Prostate gland (tissue), 2 donors: ENCODE measurements at regions of chr12 and their contacts with region 1.

Region 1: GRCh38 chr12:25436203-25437030 is 116.7 kb downstream of the LMNTD1 start:
- DNase-seq: peak; percentile 22
- H3K4me3 ChIP-seq: no peak overlapping the region
- H3K27ac ChIP-seq: no peak overlapping the region
- H3K4me1 ChIP-seq: no peaks in the 10 kb centered on the region
- H3K27me3 ChIP-seq: no peaks in the 10 kb centered on the region
- CTCF ChIP-seq: peak; percentile 63 to 77 (median 70)
- POLR2A ChIP-seq: no peak

Region 2: GRCh38 chr12:25482625-25483024 is 46.2 kb after region 1 on chr12:
- intact Hi-C with region 1: no loop called
- DNase-seq: no peak
- H3K4me3 ChIP-seq: no peak overlapping the region
- H3K27ac ChIP-seq: no peak overlapping the region
- H3K4me1 ChIP-seq: no peaks in the 10 kb centered on the region
- H3K27me3 ChIP-seq: no peaks in the 10 kb centered on the region
- CTCF ChIP-seq: no peak
- POLR2A ChIP-seq: no peak

Region 3: GRCh38 chr12:25958428-25959070 is 522.1 kb after region 1 on chr12 and contains the start of gene RASSF8:
- intact Hi-C with region 1: loop called (anchors 10 kb)
- DNase-seq: peak; percentile 68
- H3K4me3 ChIP-seq: peak within 1 kb of the TSS; percentile 59 to 79
- H3K27ac ChIP-seq: peak within 1 kb of the TSS; percentile 78 to 85
- H3K4me1 ChIP-seq: no peaks in the 10 kb centered on the region
- H3K27me3 ChIP-seq: no peaks in the 10 kb centered on the region
- CTCF ChIP-seq: no peak
- POLR2A ChIP-seq: peak; percentile 12
- total RNA-seq, gene RASSF8: 26.0 to 62.1 TPM

Region 4: DNA sequence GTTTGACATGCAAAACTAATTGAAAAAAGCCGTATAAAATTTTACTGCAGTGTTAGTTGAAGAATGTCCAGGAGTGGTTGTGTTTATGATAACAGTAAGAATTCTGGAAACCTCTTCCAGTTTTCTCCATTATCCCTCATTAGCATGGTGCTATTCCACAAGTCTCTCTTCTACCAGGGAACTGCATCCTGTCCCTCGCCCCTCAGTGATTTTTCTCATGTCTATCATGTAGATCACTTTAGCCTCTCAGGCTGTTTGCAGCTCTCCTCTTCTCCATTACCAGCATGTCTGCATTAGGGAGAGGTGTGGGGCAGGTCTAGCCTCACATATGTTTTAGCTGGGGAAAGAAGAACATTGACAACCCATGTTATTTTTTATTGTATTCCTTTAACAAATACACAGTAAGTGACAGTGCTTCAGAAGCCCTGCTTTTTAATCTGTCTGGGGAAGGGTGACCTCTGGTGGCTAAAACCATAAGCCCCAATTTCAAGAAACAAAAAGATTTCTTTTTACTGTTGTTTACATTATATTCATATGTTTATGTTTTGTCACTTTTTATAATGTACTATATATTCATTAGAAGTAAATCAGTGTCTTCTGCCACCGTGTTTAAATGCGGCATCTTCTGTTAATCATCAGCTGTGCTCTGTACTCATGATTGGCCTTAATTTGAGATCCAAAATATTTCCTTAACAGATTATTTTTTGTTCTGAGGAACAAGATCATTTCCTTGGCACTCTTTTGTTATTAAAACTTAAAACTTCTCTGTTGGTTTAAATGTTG is 592.7 kb after region 1 on chr12:
- intact Hi-C with region 1: loop called (anchors 5 kb)
- DNase-seq: peak; percentile 42
- H3K4me3 ChIP-seq: no peak overlapping the region
- H3K27ac ChIP-seq: no peak overlapping the region
- H3K4me1 ChIP-seq: peaks cover 8% of the 10 kb centered on the region
- H3K27me3 ChIP-seq: no peaks in the 10 kb centered on the region
- CTCF ChIP-seq: peak; percentile 53 to 88 (median 79)
- POLR2A ChIP-seq: no peak

Region 5: GRCh38 chr12:26097046-26097878 is 660.8 kb after region 1 on chr12:
- intact Hi-C with region 1: loop called (anchors 10 kb)
- DNase-seq: peak; percentile 67
- H3K4me3 ChIP-seq: no peak overlapping the region
- H3K27ac ChIP-seq: no peak overlapping the region
- H3K4me1 ChIP-seq: peaks cover 7% of the 10 kb centered on the region
- H3K27me3 ChIP-seq: no peaks in the 10 kb centered on the region
- CTCF ChIP-seq: peak; percentile 65 to 92 (median 85)
- POLR2A ChIP-seq: no peak